IMR-90 (cell line): ENCODE measurements at regions of chr2 and their contacts with region 1.

Region 1: DNA sequence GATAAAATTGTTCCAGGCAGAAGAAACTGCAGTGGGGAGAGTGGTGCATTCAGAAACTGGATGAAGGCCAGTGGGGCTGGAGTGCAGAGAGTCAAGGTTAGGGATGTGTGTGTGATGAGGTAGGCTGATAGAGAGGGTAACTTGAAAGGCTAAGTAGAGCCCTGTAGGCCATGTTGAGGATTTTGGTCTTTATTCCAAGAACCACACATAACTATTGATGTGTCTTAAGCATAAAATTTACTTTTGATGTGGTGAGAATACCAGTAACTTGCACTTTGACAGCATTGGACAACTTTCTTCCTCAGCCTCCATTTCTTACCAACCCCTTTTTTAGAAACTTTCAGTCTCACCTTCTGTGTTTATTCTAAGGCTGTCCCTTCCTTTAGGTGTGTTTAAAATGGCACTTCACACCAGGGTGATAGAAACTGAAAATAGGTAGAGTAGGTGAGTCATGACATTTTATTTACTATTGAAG is 22.6 kb downstream of the MTX2 start:
- DNase-seq: no peak
- ATAC-seq: no peak
- H3K4me3 ChIP-seq: no peak overlapping the region
- H3K27ac ChIP-seq: no peak overlapping the region
- H3K4me1 ChIP-seq: no peaks in the 10 kb centered on the region
- H3K27me3 ChIP-seq: no peaks in the 10 kb centered on the region
- CTCF ChIP-seq: no peak
- POLR2A ChIP-seq: no peak
- RAD21 ChIP-seq: no peak

Region 2: DNA sequence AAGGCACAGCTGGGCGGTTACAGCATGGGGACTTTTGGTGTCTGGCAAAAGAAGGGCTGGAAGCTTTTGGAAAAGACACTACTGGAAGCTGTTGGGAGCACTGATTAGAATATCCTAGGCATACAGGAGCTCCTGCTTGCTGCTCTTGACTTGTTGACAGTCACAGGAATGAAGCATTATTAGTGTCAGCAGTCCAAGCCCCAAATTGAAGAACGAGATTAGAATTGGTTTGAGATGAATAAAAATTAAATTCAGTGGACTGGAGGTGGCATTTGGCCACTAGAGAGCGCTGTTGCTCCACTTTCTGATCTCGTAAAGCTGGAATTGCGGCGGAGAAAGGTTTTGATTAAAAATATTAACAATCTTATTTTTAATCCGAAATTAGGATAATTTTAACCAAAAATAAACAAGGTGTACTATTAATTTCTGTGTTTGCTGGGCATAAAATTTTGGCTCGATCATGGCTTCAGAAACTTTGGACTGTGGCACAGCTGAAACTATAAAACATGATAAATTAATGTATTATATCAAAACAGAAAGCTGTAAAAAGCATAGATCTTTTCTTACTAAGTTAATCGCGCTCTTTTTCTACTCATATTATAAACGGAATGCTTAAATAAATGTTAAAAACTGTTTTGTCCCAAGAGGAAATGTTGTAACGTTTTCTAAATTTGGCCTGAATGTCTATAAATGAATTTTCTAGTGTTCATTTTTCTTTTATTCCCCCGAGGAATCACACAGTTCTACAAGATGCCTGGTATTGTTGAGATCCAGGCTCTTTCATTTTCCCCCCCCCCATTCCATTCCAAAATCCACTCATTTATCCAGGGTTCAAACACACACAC is 164.7 kb before region 1 on chr2:
- CTCF ChIA-PET with region 1: no interaction called
- POLR2A ChIA-PET with region 1: no interaction called
- dilution Hi-C with region 1: no loop called
- in situ Hi-C with region 1: no loop called
- intact Hi-C with region 1: no loop called
- DNase-seq: peak; percentile 58
- ATAC-seq: peak; percentile 40; the same call in 1 of the 2 replicates
- H3K4me3 ChIP-seq: no peak overlapping the region
- H3K27ac ChIP-seq: no peak overlapping the region
- H3K4me1 ChIP-seq: no peaks in the 10 kb centered on the region
- H3K27me3 ChIP-seq: peaks cover 88% of the 10 kb centered on the region
- CTCF ChIP-seq: peak; percentile 92
- POLR2A ChIP-seq: no peak
- RAD21 ChIP-seq: peak; percentile 89

Region 3: DNA sequence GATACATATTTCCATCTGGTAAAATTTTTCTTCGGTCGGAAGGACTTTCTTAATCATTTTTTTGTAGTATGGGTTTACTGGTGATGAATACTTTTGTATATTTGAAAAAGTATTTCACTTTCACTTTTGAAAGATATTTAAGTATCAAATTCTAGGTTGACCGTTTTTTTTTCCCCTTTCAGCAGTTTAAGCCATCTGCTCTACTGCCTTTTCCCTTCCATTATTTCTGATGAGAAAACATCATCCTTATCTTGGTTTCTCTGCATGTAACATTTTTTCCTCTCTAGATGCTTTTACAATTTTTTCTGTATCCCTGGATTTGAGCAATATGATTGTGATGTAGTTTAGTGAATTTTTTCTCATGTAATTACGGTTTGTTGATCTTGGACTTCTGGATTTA is 64.4 kb after region 1 on chr2:
- CTCF ChIA-PET with region 1: no interaction called
- POLR2A ChIA-PET with region 1: interaction called, 16 read pairs
- dilution Hi-C with region 1: no loop called
- in situ Hi-C with region 1: no loop called
- intact Hi-C with region 1: no loop called
- DNase-seq: peak; percentile 0
- ATAC-seq: no peak
- H3K4me3 ChIP-seq: no peak overlapping the region
- H3K27ac ChIP-seq: no peak overlapping the region
- H3K4me1 ChIP-seq: no peaks in the 10 kb centered on the region
- H3K27me3 ChIP-seq: no peaks in the 10 kb centered on the region
- CTCF ChIP-seq: no peak
- POLR2A ChIP-seq: no peak
- RAD21 ChIP-seq: no peak

Region 4: DNA sequence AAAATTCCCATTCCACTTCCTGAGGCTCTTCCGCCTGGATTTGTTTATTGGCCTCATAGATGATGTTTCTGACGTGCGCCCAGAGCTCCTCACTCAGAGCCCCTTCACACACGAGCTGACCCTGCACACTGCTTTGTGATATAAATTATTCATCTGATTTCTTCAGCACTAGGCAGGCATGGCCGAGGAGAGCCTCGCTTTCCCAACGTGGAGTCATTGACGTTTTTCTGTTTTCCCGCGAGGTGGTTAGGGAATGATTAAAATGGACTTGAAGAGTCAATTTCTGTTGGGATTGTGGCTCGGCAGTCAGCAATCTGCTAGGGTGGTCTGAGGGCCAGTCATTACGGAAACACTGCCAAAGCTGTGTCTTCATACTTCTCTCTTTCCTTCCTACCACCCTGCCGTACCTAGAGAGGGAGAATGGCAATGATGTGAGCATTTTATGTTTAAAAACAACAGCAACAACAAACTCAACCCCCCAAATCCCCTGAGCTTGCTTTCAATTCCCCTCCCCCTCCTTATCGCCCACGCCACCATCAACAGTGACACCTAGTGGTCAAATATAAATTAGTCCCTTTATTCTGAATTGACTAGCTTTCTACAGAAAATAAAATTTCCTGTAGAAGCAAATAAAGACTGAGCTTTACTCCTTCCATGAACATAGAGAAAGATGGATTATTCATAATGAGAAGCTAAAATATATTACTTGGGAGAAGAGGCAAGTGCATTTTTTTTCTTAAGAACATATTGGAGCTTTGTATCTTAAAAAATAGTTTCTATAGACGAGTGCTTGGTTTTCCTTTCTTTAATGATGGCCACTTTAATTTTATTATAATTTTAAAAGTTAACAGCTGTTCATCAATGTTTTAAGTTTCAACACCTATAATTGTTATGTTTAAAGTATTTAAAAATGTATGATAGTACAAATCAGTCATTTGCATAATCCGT is 262.5 kb after region 1 on chr2:
- CTCF ChIA-PET with region 1: no interaction called
- POLR2A ChIA-PET with region 1: no interaction called
- dilution Hi-C with region 1: no loop called
- in situ Hi-C with region 1: no loop called
- intact Hi-C with region 1: no loop called
- DNase-seq: peak; percentile 52
- ATAC-seq: peak; percentile 75
- H3K4me3 ChIP-seq: peak overlapping the region; percentile 38
- H3K27ac ChIP-seq: no peak overlapping the region
- H3K4me1 ChIP-seq: no peaks in the 10 kb centered on the region
- H3K27me3 ChIP-seq: peaks cover 16% of the 10 kb centered on the region
- CTCF ChIP-seq: peak; percentile 80
- POLR2A ChIP-seq: no peak
- RAD21 ChIP-seq: peak; percentile 62

Region 5: GRCh38 chr2:178101321-178102079 is 1809.7 kb after region 1 on chr2:
- CTCF ChIA-PET with region 1: no interaction called
- POLR2A ChIA-PET with region 1: no interaction called
- dilution Hi-C with region 1: no loop called
- in situ Hi-C with region 1: no loop called
- intact Hi-C with region 1: no loop called
- DNase-seq: peak; percentile 1
- ATAC-seq: no peak
- H3K4me3 ChIP-seq: no peak overlapping the region
- H3K27ac ChIP-seq: no peak overlapping the region
- H3K4me1 ChIP-seq: no peaks in the 10 kb centered on the region
- H3K27me3 ChIP-seq: no peaks in the 10 kb centered on the region
- CTCF ChIP-seq: no peak
- POLR2A ChIP-seq: no peak
- RAD21 ChIP-seq: no peak